Activated CD4-positive, alpha-beta T cell treated with anti-CD3 and anti-CD28 coated beads, Interleukin-2, amount 10 ng/mL, durations not matched to agents 24 days and 14 days (primary cell): ENCODE measurements at regions of chr3 and their contacts with region 1.

Region 1: DNA sequence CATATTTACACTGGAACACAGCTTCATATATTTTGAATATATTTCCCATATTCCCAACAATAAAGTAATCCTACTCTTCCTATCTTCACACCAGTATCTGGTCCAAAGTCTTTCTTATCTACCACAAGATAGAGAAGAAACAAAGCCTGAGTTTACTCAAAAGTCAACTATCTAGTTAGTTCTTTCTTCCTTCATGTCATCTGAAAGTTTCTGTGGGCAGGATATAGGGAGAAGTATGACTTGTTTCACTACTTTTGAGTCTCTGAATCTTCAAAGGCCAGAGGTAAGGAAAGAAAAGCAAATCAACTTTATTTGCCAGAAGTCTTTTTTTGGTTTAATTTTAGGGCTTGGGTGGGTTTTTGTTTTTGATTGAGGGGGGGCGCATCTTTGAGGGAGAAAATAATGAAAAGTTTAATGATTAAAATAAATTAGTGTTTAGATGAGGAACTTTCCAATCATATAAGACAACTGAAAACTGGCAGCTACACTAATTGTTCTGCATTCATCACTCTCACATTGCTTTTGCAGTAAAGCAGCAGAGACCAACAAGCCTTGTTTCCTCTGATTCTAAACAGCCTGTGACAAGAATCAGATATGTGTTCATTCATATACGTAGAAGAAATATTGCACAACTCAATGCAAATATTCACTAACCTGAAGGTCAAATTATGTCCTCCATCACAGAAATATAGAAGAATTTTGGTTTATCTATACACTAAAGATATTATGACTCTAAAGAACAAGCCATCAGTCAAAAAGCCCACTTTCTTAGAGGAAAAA is 421.4 kb downstream of the SHQ1 start:
- DNase-seq: no peak
- H3K4me3 Mint-ChIP-seq: peak overlapping the region; percentile 55
- H3K27ac Mint-ChIP-seq: peak overlapping the region; percentile 90
- H3K4me1 Mint-ChIP-seq: peaks cover 59% of the 10 kb centered on the region
- H3K27me3 Mint-ChIP-seq: no peaks in the 10 kb centered on the region

Region 2: GRCh38 chr3:71978150-71978721 is 448.6 kb before region 1 on chr3:
- intact Hi-C with region 1: loop called (anchors 5 kb)
- DNase-seq: peak; percentile 76
- H3K4me3 Mint-ChIP-seq: peak overlapping the region; percentile 59
- H3K27ac Mint-ChIP-seq: peak overlapping the region; percentile 88
- H3K4me1 Mint-ChIP-seq: peaks cover 45% of the 10 kb centered on the region
- H3K27me3 Mint-ChIP-seq: no peaks in the 10 kb centered on the region

Region 3: GRCh38 chr3:72339116-72340030 is 87.4 kb before region 1 on chr3:
- intact Hi-C with region 1: loop called (anchors 2 kb)
- DNase-seq: no peak
- H3K4me3 Mint-ChIP-seq: no peak overlapping the region
- H3K27ac Mint-ChIP-seq: no peak overlapping the region
- H3K4me1 Mint-ChIP-seq: peaks cover 32% of the 10 kb centered on the region
- H3K27me3 Mint-ChIP-seq: no peaks in the 10 kb centered on the region

Region 4: DNA sequence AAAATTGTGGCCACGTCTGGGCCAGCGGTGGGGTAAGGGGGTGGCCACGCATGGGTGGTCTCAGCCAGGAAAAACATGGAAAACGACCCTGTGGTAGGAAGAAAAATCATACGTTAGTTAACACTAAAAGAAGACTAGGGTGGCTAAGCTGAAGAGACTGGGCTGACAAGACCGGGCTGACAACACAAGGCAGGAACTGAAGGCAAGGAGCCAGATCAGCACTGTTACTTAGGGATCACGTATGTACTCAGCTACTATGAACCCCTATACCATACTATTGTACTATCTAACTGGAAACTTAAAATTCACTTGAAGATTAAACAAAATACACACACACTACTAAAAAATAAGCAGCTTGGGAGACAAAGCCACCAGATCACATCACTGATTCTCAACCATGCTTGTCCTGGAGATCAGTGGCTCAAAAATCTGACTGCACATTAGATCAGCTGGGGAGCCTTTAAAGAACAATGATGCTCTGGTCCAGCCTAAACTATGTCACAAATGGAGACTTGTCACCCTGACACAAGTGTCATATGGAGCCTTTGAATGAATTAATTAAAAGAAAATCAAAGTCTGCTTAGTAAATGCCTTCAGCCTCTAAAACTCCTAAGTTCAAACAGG is 20.8 kb before region 1 on chr3:
- intact Hi-C with region 1: loop called (anchors 1 kb)
- DNase-seq: no peak
- H3K4me3 Mint-ChIP-seq: no peak overlapping the region
- H3K27ac Mint-ChIP-seq: no peak overlapping the region
- H3K4me1 Mint-ChIP-seq: peaks cover 61% of the 10 kb centered on the region
- H3K27me3 Mint-ChIP-seq: no peaks in the 10 kb centered on the region

Region 5: DNA sequence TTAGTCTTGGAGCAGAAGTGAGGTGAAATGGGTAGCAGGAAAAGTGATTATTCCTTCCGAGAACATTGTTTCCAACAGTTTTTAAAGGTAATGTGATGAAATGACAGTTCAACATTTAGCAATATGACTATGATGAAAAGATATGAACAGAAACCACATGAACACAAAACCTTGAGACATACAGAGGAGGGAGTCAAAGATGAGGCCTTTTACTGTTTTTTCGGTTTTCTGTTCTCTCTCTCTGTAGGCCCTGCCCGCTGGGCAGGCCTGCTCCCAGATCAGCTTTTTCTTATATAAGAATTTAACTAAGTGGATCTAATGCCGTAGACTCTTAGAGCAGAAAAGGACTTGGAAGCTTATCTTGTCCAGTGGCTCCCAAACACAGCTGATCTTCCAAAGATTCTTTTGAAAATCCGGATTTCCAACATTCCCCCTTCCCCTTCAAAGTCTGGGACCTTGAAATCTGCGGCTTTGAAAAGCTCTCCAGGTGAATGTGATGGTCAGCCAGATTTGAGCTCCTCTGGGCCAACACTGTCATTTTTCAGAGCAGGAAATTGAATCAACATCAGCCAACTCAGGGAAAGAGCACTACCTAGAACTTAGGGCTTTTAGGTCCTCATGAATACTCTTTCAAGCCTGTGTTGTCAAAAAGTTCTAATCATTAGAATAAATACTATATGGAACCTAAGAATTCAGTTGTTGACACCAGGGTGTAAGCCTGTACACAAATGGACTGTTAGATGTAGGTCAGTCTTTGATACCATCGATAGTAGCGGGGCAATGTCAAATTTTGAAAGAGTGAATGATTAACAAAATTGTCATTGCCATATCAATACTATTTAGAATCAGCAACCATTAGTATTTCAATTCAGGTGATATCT is 48.7 kb after region 1 on chr3:
- intact Hi-C with region 1: loop called (anchors 2 kb)
- DNase-seq: no peak
- H3K4me3 Mint-ChIP-seq: peak overlapping the region; percentile 45
- H3K27ac Mint-ChIP-seq: peak overlapping the region; percentile 78
- H3K4me1 Mint-ChIP-seq: peaks cover 32% of the 10 kb centered on the region
- H3K27me3 Mint-ChIP-seq: no peaks in the 10 kb centered on the region

Region 6: GRCh38 chr3:72515281-72515680 is 88.5 kb after region 1 on chr3:
- intact Hi-C with region 1: no loop called
- DNase-seq: no peak
- H3K4me3 Mint-ChIP-seq: no peak overlapping the region
- H3K27ac Mint-ChIP-seq: no peak overlapping the region
- H3K4me1 Mint-ChIP-seq: peaks cover 10% of the 10 kb centered on the region
- H3K27me3 Mint-ChIP-seq: no peaks in the 10 kb centered on the region

Region 7: DNA sequence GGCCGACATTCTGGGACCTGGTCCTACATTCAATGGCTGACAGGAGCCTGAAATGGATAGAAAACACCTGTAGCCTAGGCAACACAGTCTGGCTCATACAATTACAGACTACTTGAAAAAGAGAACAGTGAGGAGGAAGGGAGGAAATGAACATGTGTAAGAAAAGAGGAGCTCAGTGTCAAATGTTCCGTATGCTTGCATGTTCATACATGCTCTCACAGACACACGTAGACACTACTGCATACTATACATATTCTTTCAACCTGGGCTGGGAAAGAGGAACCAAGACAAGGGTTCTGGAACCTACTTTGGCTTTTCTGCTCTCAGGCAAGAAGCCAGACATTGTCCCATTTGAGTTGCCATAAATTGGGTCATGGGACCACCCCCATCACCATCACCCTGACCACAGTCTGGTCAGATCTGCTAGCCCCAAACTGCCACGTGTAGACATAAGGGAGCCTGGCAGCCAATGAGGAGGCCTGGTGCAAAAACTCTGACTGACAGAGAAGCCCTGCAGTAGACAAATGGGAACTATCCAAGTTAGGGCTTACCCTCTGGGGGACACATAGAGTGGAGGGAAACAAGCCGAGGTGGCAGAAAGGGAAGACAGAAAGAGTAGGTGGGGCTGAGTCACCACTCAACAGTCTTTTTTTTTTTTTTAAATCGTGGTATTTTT is 111.4 kb after region 1 on chr3:
- intact Hi-C with region 1: loop called (anchors 5 kb)
- DNase-seq: no peak
- H3K4me3 Mint-ChIP-seq: no peak overlapping the region
- H3K27ac Mint-ChIP-seq: peak overlapping the region; percentile 75
- H3K4me1 Mint-ChIP-seq: peaks cover 32% of the 10 kb centered on the region
- H3K27me3 Mint-ChIP-seq: no peaks in the 10 kb centered on the region

Region 8: GRCh38 chr3:72756900-72757299 is 330.1 kb after region 1 on chr3:
- intact Hi-C with region 1: loop called (anchors 5 kb)
- DNase-seq: peak; percentile 87
- H3K4me3 Mint-ChIP-seq: peak overlapping the region; percentile 60
- H3K27ac Mint-ChIP-seq: peak overlapping the region; percentile 81
- H3K4me1 Mint-ChIP-seq: peaks cover 39% of the 10 kb centered on the region
- H3K27me3 Mint-ChIP-seq: no peaks in the 10 kb centered on the region